ENCODE measurements at regions of chr17 and their contacts with region 1.

Region 1: GRCh38 chr17:43388359-43389045 is 10.3 kb upstream of the ARL4D start:
- DNase-seq: peak; percentile 92 to 95 (median 93)
- H3K4me3 ChIP-seq: peak overlapping the region; percentile 73 to 86
- H3K4me3 Mint-ChIP-seq: peak overlapping the region; percentile 92 to 100 (median 97)
- H3K27ac ChIP-seq: peak overlapping the region; percentile 93
- H3K27ac Mint-ChIP-seq: peak overlapping the region; percentile 97 to 100 (median 98)
- H3K4me1 ChIP-seq: peaks cover 19% of the 10 kb centered on the region
- H3K4me1 Mint-ChIP-seq: peaks cover 12 to 35% (median 27%) of the 10 kb centered on the region in 4 donors
- H3K27me3 ChIP-seq: no peaks in the 10 kb centered on the region
- H3K27me3 Mint-ChIP-seq: no peaks in the 10 kb centered on the region

Region 2: GRCh38 chr17:43377056-43377810 is 11.3 kb before region 1 on chr17:
- CTCF ChIA-PET with region 1: interaction called, 5 read pairs
- POLR2A ChIA-PET with region 1: interaction called, 20 read pairs
- intact Hi-C with region 1: no loop called
- DNase-seq: no peak
- H3K4me3 ChIP-seq: no peak overlapping the region
- H3K4me3 Mint-ChIP-seq: no peak overlapping the region
- H3K27ac ChIP-seq: no peak overlapping the region
- H3K27ac Mint-ChIP-seq: no peak overlapping the region
- H3K4me1 ChIP-seq: no peaks in the 10 kb centered on the region
- H3K4me1 Mint-ChIP-seq: peaks cover 4 to 10% (median 6%) of the 10 kb centered on the region in 4 donors
- H3K27me3 ChIP-seq: no peaks in the 10 kb centered on the region
- H3K27me3 Mint-ChIP-seq: no peaks in the 10 kb centered on the region

Region 3: DNA sequence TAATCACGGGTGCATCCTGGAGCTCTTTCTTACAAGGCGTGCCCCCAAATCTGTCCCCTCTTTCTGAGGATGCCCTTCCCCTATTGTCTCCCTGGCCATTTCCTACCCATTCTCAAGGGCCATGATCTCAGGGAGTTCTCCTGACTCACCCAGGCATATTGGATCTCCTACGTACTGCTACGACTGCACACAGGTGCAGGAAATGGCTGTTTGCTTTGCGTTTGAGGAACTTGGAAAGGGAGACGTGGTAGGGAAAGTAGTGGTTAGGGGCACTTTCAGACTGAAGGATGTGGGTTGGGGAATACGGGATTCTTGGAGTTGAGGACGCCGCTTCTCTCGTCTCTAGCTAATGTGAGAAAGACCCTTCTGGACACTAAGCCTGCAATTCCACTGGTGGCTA is 292.0 kb after region 1 on chr17:
- CTCF ChIA-PET with region 1: no interaction called
- POLR2A ChIA-PET with region 1: no interaction called
- intact Hi-C with region 1: no loop called
- DNase-seq: no peak
- H3K4me3 ChIP-seq: no peak overlapping the region
- H3K4me3 Mint-ChIP-seq: no peak overlapping the region
- H3K27ac ChIP-seq: no peak overlapping the region
- H3K27ac Mint-ChIP-seq: no peak overlapping the region
- H3K4me1 ChIP-seq: peaks cover 8% of the 10 kb centered on the region
- H3K4me1 Mint-ChIP-seq: peaks cover 4 to 6% (median 5%) of the 10 kb centered on the region in 4 donors
- H3K27me3 ChIP-seq: no peaks in the 10 kb centered on the region
- H3K27me3 Mint-ChIP-seq: peaks cover 4 to 9% of the 10 kb centered on the region in 2 donors